Mammary epithelial cell (primary cell): ENCODE measurements at regions of chr3 and their contacts with region 1.

Region 1: DNA sequence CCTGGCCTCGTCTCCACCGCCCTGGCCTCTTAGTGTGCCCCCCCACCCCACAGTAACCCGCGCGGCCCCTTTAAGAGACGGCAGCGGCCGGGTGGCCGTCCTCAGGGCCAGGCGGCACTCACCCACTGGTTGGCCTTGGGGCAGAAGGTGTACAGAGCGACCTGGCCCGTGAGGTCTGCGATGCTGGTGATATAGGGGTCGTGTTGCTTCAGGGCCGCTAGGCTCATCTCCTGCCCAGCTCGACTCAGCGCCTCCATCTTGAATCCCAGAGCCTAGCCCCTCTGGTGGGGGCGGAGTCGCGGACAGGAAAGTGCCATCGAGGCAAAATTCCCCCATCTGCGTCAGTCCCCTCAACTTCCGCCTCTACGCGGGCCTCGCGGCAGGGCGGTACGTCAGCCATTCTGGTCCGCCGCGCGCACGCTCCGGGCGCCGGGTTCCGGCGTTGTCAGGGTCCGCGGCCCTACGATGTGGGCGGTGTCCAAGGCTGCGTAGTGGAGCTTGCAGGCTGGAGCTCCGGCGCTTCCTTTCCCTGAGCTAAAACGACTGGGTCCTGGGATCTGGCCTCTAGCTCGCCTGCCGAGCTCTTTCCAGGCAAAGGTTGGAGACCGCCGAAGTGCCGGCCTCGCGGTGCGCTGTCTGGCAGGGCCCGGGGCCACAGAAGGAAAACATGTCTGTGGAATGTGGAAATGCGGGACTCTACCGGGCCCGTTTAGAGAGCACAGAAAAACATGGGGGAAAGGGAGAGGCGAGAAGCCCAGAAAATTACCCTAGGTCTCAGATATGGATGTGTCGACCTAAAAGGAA is at the start of gene DCP1A:
- DNase-seq: peak; percentile 95
- H3K4me3 ChIP-seq: peak within 1 kb of the TSS; percentile 84 to 92 (median 85)
- H3K27ac ChIP-seq: peak within 1 kb of the TSS; percentile 86
- H3K4me1 ChIP-seq: no peaks in the 10 kb centered on the region
- H3K27me3 ChIP-seq: no peaks in the 10 kb centered on the region
- CTCF ChIP-seq: no peak
- total RNA-seq, gene DCP1A: 15.6 to 15.8 TPM

Region 2: GRCh38 chr3:53114011-53114400 is 233.5 kb before region 1 on chr3:
- CTCF ChIA-PET with region 1: interaction called, 3 read pairs
- dilution Hi-C with region 1: loop called (anchors 10 kb)
- in situ Hi-C with region 1: no loop called
- intact Hi-C with region 1: loop called (anchors 2 kb)
- DNase-seq: peak; percentile 76
- H3K4me3 ChIP-seq: no peak overlapping the region
- H3K27ac ChIP-seq: peak overlapping the region; percentile 50
- H3K4me1 ChIP-seq: peaks cover 41% of the 10 kb centered on the region
- H3K27me3 ChIP-seq: no peaks in the 10 kb centered on the region
- CTCF ChIP-seq: peak; percentile 85 to 92

Region 3: DNA sequence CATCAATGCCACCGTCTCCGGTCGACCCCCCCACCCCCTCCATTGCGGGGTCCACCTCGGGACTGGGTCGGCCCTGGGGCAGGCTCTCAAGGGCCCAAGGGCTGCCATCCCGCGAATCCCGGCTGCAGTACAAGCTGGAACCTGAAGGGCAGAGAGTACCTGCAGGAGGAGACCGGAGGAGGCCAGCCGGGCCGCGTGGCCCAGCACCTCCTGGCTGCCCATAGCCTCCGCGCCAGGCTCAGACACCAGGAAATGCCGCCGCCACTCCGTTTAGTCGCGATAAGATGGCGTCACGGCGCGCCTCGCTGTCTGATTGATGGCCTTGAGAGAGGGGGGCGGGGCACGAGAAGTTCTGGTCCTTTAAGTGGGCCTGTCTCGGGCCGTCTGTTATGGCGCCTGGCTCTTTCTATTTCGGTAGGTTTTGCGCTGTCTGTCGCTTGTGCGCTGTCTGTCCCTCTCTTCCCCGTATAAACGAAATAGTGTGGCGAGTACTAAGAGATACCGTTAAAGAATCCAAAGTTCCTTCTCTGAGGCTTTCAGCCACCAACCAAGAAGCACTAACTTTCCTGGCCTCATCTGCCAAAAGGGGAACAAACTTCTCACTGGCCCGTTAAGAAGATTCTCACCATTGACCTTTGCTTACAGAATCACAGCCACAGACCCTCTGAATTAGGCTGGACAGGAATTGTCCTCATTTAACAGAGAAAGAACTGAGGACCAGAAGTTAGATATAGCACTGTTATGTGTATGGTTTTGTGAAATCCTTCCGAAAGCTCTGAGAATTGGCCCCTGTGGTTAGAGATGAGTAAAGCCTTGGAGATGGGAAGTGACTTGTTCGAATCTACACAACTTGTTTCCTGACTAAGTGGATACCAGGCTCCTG is 217.0 kb before region 1 on chr3 and contains the start of gene RFT1:
- CTCF ChIA-PET with region 1: no interaction called
- dilution Hi-C with region 1: no loop called
- in situ Hi-C with region 1: no loop called
- intact Hi-C with region 1: loop called (anchors 1 kb)
- DNase-seq: peak; percentile 93
- H3K4me3 ChIP-seq: peak within 1 kb of the TSS; percentile 77 to 89 (median 77)
- H3K27ac ChIP-seq: peak within 1 kb of the TSS; percentile 75
- H3K4me1 ChIP-seq: peaks cover 30% of the 10 kb centered on the region
- H3K27me3 ChIP-seq: no peaks in the 10 kb centered on the region
- CTCF ChIP-seq: peak; percentile 8 to 21
- total RNA-seq, gene RFT1: 15.2 to 29.3 TPM

Region 4: DNA sequence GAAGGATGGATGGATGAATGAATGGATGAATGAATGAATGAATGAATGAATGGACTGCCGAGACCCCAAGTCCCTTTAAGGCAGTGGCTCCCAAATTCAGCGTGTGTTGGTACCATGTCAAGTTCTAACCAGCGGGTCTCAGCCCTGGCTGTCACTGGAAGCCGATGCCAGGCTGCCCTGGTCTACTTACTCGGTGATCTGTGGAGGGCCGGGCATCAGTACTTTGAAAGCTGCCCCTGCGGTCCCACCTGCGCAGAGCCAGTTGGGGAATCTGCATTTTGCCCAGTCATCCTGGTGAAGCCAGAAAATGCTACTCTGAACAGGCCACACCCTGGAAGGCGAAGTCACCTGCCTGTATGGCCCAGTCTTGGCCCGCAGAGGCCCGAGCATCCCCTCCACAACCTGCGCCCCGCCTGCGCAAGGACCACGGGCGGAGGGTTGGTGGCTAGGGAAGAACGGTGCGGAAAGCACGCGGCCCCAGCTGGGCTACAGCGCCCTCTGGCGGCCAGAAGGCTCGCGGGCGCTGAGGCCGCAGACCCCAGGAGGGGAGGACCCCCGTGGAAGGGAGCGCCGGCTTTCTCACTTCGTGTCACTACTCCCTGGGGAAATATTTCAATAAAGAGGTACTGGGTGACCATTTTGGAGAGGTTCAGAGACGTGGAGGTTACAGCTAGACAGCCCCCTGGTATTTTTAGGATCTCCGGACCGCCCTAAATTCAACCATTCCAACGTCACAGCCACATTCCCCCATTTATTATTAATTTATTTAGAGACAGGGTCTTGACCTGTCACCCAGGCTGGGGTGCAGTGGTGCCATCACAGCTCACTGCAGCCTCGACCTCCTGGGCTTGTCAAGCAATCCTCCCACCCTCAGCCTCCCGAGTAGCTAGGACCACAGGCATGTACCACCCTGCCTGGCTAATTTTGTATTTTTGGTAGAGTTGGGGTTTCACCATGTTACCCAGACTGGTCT is 151.6 kb before region 1 on chr3:
- CTCF ChIA-PET with region 1: no interaction called
- dilution Hi-C with region 1: no loop called
- in situ Hi-C with region 1: no loop called
- intact Hi-C with region 1: loop called (anchors 5 kb)
- DNase-seq: peak; percentile 16
- H3K4me3 ChIP-seq: no peak overlapping the region
- H3K27ac ChIP-seq: no peak overlapping the region
- H3K4me1 ChIP-seq: peaks cover 11% of the 10 kb centered on the region
- H3K27me3 ChIP-seq: no peaks in the 10 kb centered on the region
- CTCF ChIP-seq: peak; percentile 70 to 99

Region 5: DNA sequence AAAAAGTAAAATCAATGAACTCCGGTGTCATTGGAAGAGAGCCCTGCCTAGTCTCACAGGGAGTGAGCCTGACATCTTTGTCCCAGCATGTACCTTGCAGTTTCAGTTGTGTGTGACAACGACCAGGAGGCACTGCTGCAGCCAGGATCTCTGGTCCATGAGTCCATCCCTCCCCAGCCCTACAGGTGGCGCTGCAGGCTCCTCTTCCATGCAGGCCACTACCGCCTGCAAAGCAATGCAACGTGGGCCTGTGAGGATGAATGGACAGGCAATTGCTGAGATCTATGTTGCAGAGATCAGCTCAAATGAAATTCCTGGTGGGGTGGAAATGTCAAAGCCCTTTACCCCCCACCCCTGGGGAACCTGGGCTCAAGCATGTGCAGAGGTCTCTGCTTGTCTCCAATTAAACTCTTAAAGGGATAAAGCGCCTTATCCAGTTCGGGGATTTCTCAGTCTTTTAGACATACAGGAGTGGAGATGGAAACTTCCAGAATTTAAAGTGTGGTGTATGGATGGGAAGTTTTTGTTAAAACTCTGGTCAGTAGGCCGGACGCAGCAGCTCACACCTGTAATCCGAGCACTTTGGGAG is 127.5 kb before region 1 on chr3:
- CTCF ChIA-PET with region 1: no interaction called
- dilution Hi-C with region 1: no loop called
- in situ Hi-C with region 1: no loop called
- intact Hi-C with region 1: loop called (anchors 1 kb)
- DNase-seq: peak; percentile 63
- H3K4me3 ChIP-seq: no peak overlapping the region
- H3K27ac ChIP-seq: no peak overlapping the region
- H3K4me1 ChIP-seq: no peaks in the 10 kb centered on the region
- H3K27me3 ChIP-seq: no peaks in the 10 kb centered on the region
- CTCF ChIP-seq: peak; percentile 96 to 97

Region 6: DNA sequence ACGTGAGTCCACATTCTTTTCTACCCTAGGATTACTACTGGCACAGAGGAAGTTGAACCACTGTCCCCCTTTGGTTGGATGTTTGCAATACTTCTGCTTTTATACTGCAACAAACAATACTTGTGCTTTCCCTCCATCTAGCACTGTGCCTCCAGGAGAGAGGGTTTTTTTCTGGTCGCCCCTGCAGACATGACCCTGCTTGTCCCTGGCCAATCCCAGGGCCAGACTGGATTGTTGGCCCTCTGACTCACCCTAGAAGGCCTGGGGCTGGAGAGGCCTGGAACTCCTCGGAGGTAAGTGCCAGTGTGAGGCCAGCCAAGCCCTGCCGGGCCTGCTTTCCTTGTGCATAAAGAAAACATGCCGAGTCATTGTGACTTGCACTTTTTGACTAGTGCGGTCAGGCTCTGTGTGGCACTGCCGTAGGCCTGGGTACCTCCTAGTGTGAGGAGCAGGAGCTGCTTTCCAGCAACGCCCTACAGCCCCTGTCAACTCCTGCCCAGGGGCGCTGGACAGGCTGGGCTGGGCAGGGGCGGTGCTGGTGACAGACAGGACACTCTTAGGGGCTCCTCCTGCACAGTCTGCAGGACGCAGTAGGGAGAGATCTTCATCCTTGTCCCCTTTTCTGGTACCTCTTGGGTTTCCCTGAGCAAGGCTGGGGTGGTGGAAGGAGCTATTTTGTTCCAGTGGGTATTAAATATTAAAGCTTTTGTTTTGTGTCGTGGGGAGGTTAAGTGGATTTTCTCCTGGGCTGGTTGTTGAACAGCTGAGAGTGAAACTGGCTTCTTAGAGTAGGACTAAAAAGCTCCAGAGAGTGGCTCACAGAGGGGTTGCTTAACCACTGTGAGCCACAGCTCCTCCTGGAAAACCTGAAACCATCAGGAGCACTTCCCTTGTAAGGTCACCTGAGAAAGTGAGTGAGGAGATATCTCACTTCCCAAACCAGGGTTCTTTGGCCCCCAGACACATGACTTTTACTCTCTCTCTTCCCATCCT is 77.3 kb before region 1 on chr3:
- CTCF ChIA-PET with region 1: no interaction called
- dilution Hi-C with region 1: loop called (anchors 5 kb)
- in situ Hi-C with region 1: no loop called
- intact Hi-C with region 1: no loop called
- DNase-seq: peak; percentile 100
- H3K4me3 ChIP-seq: peak overlapping the region in 1 of 3 experiments; percentile 28
- H3K27ac ChIP-seq: peak overlapping the region; percentile 85
- H3K4me1 ChIP-seq: peaks cover 28% of the 10 kb centered on the region
- H3K27me3 ChIP-seq: no peaks in the 10 kb centered on the region
- CTCF ChIP-seq: peak in 1 of 2 donors; percentile 28

Region 7: DNA sequence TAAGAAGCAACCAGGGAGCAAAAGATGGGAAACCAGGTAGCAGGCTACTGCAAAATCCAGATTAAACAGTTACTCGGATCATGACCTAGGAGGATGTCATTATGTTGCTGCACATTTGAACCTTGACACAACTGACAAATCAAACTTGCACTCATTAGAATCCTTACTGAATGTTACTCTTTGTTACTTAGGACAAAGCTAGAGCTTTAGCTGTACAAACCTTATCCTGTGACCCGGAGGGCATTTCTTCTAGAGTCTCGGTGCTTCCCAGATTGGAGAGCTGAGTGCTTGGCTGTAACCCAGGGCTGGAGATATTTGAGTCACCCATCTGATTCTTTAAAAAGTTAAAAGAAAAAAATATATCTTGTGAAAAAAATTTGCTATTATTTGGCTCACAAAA is 43.5 kb before region 1 on chr3:
- CTCF ChIA-PET with region 1: no interaction called
- dilution Hi-C with region 1: no loop called
- in situ Hi-C with region 1: no loop called
- intact Hi-C with region 1: loop called (anchors 1 kb)
- DNase-seq: no peak
- H3K4me3 ChIP-seq: no peak overlapping the region
- H3K27ac ChIP-seq: no peak overlapping the region
- H3K4me1 ChIP-seq: no peaks in the 10 kb centered on the region
- H3K27me3 ChIP-seq: no peaks in the 10 kb centered on the region
- CTCF ChIP-seq: no peak

Region 8: GRCh38 chr3:53416530-53416929 is 69.1 kb after region 1 on chr3:
- CTCF ChIA-PET with region 1: no interaction called
- dilution Hi-C with region 1: no loop called
- in situ Hi-C with region 1: no loop called
- intact Hi-C with region 1: no loop called
- DNase-seq: no peak
- H3K4me3 ChIP-seq: no peak overlapping the region
- H3K27ac ChIP-seq: no peak overlapping the region
- H3K4me1 ChIP-seq: no peaks in the 10 kb centered on the region
- H3K27me3 ChIP-seq: no peaks in the 10 kb centered on the region
- CTCF ChIP-seq: no peak